ENCODE measurements at regions of chr19 and their contacts with region 1.

Region 1: GRCh38 chr19:37466798-37467607 is at the start of gene ZNF569:
- DNase-seq: peak; percentile 86 to 96
- ATAC-seq: peak; percentile 64 to 80 (median 67)
- H3K4me3 ChIP-seq: peak within 1 kb of the TSS; percentile 89
- H3K4me3 Mint-ChIP-seq: peak within 1 kb of the TSS; percentile 94
- H3K27ac ChIP-seq: peak within 1 kb of the TSS; percentile 92
- H3K27ac Mint-ChIP-seq: peak within 1 kb of the TSS; percentile 97 to 99
- H3K4me1 ChIP-seq: peaks cover 31% of the 10 kb centered on the region
- H3K4me1 Mint-ChIP-seq: peaks cover 35 to 49% of the 10 kb centered on the region in 2 donors
- H3K27me3 ChIP-seq: no peaks in the 10 kb centered on the region
- H3K27me3 Mint-ChIP-seq: no peaks in the 10 kb centered on the region
- CTCF ChIP-seq: no peak
- total RNA-seq, gene ZNF569: 6.3 to 9.5 (median 8.0) TPM

Region 2: GRCh38 chr19:37172368-37173366 is 294.3 kb before region 1 on chr19 and contains the start of gene ZNF585A:
- intact Hi-C with region 1: loop called (anchors 5 kb)
- DNase-seq: peak; percentile 86 to 97
- ATAC-seq: peak; percentile 98 to 99 (median 99)
- H3K4me3 ChIP-seq: peak within 1 kb of the TSS; percentile 71
- H3K4me3 Mint-ChIP-seq: no peak within 1 kb of the TSS
- H3K27ac ChIP-seq: peak within 1 kb of the TSS; percentile 79
- H3K27ac Mint-ChIP-seq: no peak within 1 kb of the TSS
- H3K4me1 ChIP-seq: peaks cover 2% of the 10 kb centered on the region
- H3K4me1 Mint-ChIP-seq: peaks cover 0 to 4% of the 10 kb centered on the region in 2 donors
- H3K27me3 ChIP-seq: no peaks in the 10 kb centered on the region
- H3K27me3 Mint-ChIP-seq: no peaks in the 10 kb centered on the region
- CTCF ChIP-seq: no peak
- total RNA-seq, gene ZNF585A: 8.9 to 12.6 (median 9.9) TPM

Region 3: GRCh38 chr19:37403403-37403802 is 63.6 kb before region 1 on chr19:
- intact Hi-C with region 1: no loop called
- DNase-seq: no peak
- ATAC-seq: no peak
- H3K4me3 ChIP-seq: no peak overlapping the region
- H3K4me3 Mint-ChIP-seq: no peak overlapping the region
- H3K27ac ChIP-seq: no peak overlapping the region
- H3K27ac Mint-ChIP-seq: no peak overlapping the region
- H3K4me1 ChIP-seq: no peaks in the 10 kb centered on the region
- H3K4me1 Mint-ChIP-seq: no peaks in the 10 kb centered on the region
- H3K27me3 ChIP-seq: no peaks in the 10 kb centered on the region
- H3K27me3 Mint-ChIP-seq: no peaks in the 10 kb centered on the region
- CTCF ChIP-seq: no peak

Region 4: DNA sequence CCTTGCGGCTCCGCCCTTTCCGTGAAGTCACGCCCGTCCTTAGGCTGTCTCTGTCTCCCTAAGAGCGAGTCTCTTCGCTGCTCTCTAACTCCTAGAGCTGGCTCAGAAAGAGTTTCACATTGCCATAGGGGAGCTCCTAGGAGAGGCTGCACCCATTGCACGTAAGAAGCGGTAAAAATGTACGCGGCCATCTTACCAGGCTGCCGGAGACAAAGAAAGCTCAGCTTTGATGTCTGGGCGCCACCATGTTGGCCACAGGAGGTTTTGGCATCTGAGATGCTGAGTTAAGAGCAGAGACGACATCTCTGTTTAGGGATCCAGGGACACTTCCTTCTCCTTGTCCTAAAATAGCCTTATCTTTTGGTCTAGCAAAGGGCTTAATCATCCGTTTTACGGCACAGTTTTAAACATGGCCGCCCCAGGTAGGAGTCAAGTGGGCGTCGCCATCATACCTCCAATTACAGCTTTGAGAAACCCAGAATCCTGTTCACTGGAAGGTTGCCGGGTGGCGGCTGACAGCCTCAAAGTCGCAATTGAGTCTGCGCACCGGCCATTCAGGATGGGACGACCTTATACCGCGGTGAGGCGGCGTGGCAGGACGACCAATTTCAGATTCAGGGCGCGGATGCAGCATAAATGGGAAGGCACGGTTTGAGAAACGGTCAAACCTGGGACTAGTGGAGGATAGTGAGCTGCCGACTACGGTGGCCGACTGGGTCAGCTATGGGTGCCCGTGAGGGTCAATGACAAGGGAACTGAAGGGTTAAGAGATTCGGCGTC is 39.6 kb after region 1 on chr19 and contains the start of gene ZNF793:
- intact Hi-C with region 1: loop called (anchors 1 kb)
- DNase-seq: peak; percentile 72 to 87
- ATAC-seq: peak; percentile 86 to 90 (median 87)
- H3K4me3 ChIP-seq: peak within 1 kb of the TSS; percentile 82
- H3K4me3 Mint-ChIP-seq: no peak within 1 kb of the TSS
- H3K27ac ChIP-seq: peak within 1 kb of the TSS; percentile 98
- H3K27ac Mint-ChIP-seq: no peak within 1 kb of the TSS
- H3K4me1 ChIP-seq: peaks cover 14% of the 10 kb centered on the region
- H3K4me1 Mint-ChIP-seq: no peaks in the 10 kb centered on the region
- H3K27me3 ChIP-seq: no peaks in the 10 kb centered on the region
- H3K27me3 Mint-ChIP-seq: no peaks in the 10 kb centered on the region
- CTCF ChIP-seq: no peak
- total RNA-seq, gene ZNF793: 3.1 to 9.6 (median 4.3) TPM

Region 5: DNA sequence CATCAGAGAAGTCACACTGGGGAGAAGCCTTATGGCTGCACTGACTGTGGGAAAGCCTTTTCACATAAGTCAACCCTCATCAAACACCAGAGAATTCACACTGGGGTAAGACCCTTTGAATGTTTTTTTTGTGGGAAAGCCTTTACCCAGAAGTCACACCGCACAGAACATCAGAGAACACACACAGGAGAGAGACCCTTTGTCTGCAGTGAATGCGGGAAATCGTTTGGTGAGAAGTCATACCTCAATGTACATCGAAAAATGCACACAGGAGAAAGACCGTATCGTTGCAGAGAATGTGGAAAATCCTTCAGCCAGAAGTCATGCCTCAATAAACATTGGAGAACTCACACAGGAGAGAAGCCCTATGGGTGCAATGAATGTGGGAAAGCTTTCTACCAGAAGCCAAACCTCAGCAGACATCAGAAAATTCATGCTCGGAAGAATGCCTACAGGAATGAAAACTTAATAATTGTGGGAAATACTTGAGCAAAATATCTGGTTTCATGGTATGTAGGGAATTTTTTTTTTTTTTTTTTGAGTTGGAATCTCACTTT is 70.5 kb after region 1 on chr19:
- intact Hi-C with region 1: no loop called
- DNase-seq: no peak
- ATAC-seq: no peak
- H3K4me3 ChIP-seq: no peak overlapping the region
- H3K4me3 Mint-ChIP-seq: no peak overlapping the region
- H3K27ac ChIP-seq: no peak overlapping the region
- H3K27ac Mint-ChIP-seq: no peak overlapping the region
- H3K4me1 ChIP-seq: no peaks in the 10 kb centered on the region
- H3K4me1 Mint-ChIP-seq: no peaks in the 10 kb centered on the region
- H3K27me3 ChIP-seq: no peaks in the 10 kb centered on the region
- H3K27me3 Mint-ChIP-seq: no peaks in the 10 kb centered on the region
- CTCF ChIP-seq: no peak

Region 6: GRCh38 chr19:37719111-37719926 is 252.3 kb after region 1 on chr19 and contains the start of gene ZNF607:
- intact Hi-C with region 1: loop called (anchors 5 kb)
- DNase-seq: peak; percentile 80 to 91
- ATAC-seq: peak; percentile 90 to 91 (median 90)
- H3K4me3 ChIP-seq: peak within 1 kb of the TSS; percentile 75
- H3K4me3 Mint-ChIP-seq: peak within 1 kb of the TSS; percentile 88
- H3K27ac ChIP-seq: peak within 1 kb of the TSS; percentile 65
- H3K27ac Mint-ChIP-seq: peak within 1 kb of the TSS; percentile 79 to 86
- H3K4me1 ChIP-seq: peaks cover 13% of the 10 kb centered on the region
- H3K4me1 Mint-ChIP-seq: peaks cover 9 to 20% of the 10 kb centered on the region in 2 donors
- H3K27me3 ChIP-seq: no peaks in the 10 kb centered on the region
- H3K27me3 Mint-ChIP-seq: no peaks in the 10 kb centered on the region
- CTCF ChIP-seq: no peak
- total RNA-seq, gene ZNF607: 4.6 to 5.1 (median 4.8) TPM

Measured in natural killer cell (primary cell).